Naive thymus-derived CD4-positive, alpha-beta T cell (primary cell): ENCODE measurements at regions of chr14 and their contacts with region 1.

Region 1: DNA sequence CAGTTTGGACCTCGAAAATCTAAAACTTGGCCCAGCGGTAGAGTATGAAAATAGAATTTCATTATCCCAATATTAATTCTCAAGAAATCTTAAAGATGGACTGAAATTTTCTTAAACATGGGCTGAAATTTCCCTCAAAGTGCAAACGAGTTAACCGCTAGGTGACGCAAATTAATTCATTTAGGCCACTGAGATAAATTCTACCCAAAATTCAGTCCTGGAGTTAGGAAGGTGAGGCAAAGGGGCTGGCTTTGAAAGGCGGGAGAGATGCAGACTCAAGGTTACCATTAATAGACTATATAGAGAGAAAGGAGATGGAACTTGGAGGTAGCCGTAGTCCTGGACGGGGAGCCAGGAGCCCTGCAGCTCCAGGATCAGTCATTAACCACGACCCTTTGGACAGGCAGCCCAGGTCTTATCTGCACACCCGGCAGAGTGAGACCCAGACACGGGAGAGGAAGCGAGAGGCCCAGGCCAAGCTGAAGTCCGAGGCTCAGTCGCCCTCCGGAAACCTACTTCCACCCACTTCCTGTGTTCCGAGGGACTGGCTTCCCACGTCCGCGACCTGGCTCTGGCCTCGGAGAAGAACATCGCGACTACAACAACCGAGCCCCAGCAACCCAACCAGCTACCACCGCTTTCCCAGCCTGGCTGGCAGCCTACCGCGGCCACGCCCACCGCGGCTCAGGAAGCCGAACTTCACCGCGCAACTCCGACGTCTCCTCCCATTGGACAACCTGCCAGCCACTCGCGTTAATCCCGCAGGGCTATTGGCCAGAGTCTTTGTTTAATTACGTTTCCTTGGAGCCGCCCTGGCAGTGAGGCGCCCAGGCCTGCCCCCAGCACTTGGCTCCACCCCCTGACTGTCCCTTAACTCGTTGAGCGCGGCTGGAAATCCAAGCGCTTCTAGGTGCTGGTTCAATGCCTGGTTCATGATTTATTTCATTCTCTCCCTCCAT is at the start of gene EFCAB11:
- DNase-seq: peak; percentile 80 to 98 (median 97)
- ATAC-seq: peak; percentile 90
- H3K4me3 ChIP-seq: peak within 1 kb of the TSS; percentile 72
- H3K4me3 Mint-ChIP-seq: peak within 1 kb of the TSS; percentile 74 to 98 (median 94)
- H3K27ac ChIP-seq: peak within 1 kb of the TSS; percentile 94
- H3K27ac Mint-ChIP-seq: peak within 1 kb of the TSS; percentile 82 to 98 (median 91)
- H3K4me1 ChIP-seq: peaks cover 16 to 21% of the 10 kb centered on the region in 2 donors
- H3K4me1 Mint-ChIP-seq: peaks cover 21 to 54% (median 43%) of the 10 kb centered on the region in 7 donors
- H3K27me3 ChIP-seq: no peaks in the 10 kb centered on the region
- H3K27me3 Mint-ChIP-seq: no peaks in the 10 kb centered on the region
- total RNA-seq, gene EFCAB11: 1.2 to 8.5 (median 1.9) TPM

Region 2: GRCh38 chr14:87992718-87993628 is 1961.4 kb before region 1 on chr14 and contains the start of gene GALC:
- CTCF ChIA-PET with region 1: no interaction called
- POLR2A ChIA-PET with region 1: no interaction called
- intact Hi-C with region 1: loop called (anchors 2 to 10 kb)
- DNase-seq: peak; percentile 90 to 93 (median 92)
- ATAC-seq: peak; percentile 88
- H3K4me3 ChIP-seq: peak within 1 kb of the TSS; percentile 62
- H3K4me3 Mint-ChIP-seq: peak within 1 kb of the TSS; percentile 88 to 98 (median 94)
- H3K27ac ChIP-seq: peak within 1 kb of the TSS; percentile 94
- H3K27ac Mint-ChIP-seq: peak within 1 kb of the TSS; percentile 89 to 100 (median 99)
- H3K4me1 ChIP-seq: peaks cover 16 to 39% of the 10 kb centered on the region in 2 donors
- H3K4me1 Mint-ChIP-seq: peaks cover 40 to 74% (median 70%) of the 10 kb centered on the region in 7 donors
- H3K27me3 ChIP-seq: no peaks in the 10 kb centered on the region
- H3K27me3 Mint-ChIP-seq: no peaks in the 10 kb centered on the region
- total RNA-seq, gene GALC: 17.8 to 26.1 (median 22.3) TPM

Region 3: GRCh38 chr14:88792572-88793258 is 1161.6 kb before region 1 on chr14 and contains the start of gene EML5:
- CTCF ChIA-PET with region 1: no interaction called
- POLR2A ChIA-PET with region 1: interaction called, 3 read pairs
- intact Hi-C with region 1: loop called in 1 of 2 experiments (anchors 2 kb)
- DNase-seq: peak; percentile 78 to 89 (median 86)
- ATAC-seq: peak; percentile 93
- H3K4me3 ChIP-seq: peak within 1 kb of the TSS; percentile 87
- H3K4me3 Mint-ChIP-seq: peak within 1 kb of the TSS; percentile 83 to 93 (median 91)
- H3K27ac ChIP-seq: peak within 1 kb of the TSS; percentile 78
- H3K27ac Mint-ChIP-seq: peak within 1 kb of the TSS; percentile 42 to 94 (median 77)
- H3K4me1 ChIP-seq: peaks cover 7 to 10% of the 10 kb centered on the region in 2 donors
- H3K4me1 Mint-ChIP-seq: peaks cover 8 to 29% (median 19%) of the 10 kb centered on the region in 7 donors
- H3K27me3 ChIP-seq: no peaks in the 10 kb centered on the region
- H3K27me3 Mint-ChIP-seq: peaks cover 0 to 36% (median 0%) of the 10 kb centered on the region in 5 donors
- total RNA-seq, gene EML5: 1.3 to 6.4 (median 5.4) TPM

Region 4: DNA sequence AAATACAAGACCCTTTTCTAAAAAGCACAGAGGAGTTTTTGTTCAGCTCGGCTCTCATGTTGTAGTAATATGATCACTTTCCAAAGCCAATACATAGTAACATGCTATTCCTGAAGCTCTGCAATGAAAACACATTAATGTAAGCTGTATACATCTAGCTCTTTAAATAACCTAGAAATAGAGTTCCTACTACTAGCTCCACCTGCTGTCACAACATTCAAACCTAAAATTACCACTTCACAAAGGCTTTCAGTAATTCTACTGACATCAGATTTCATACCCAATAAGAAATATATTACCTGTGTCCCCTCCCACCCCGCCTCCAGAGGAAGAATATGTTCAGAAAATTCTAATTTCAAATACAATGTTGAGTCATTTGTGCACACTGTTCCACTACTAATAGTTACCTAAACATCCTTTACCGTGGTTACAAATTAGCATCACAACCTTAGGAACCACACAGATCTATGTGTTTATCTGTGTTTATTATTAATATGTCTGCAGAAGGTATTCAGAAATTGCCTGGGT is 17.6 kb before region 1 on chr14:
- CTCF ChIA-PET with region 1: interaction called, 8 read pairs
- POLR2A ChIA-PET with region 1: interaction called, 3 read pairs
- intact Hi-C with region 1: loop called in 1 of 2 experiments (anchors 1 kb)
- DNase-seq: no peak
- ATAC-seq: no peak
- H3K4me3 ChIP-seq: no peak overlapping the region
- H3K4me3 Mint-ChIP-seq: no peak overlapping the region
- H3K27ac ChIP-seq: no peak overlapping the region
- H3K27ac Mint-ChIP-seq: no peak overlapping the region
- H3K4me1 ChIP-seq: no peaks in the 10 kb centered on the region
- H3K4me1 Mint-ChIP-seq: no peaks in the 10 kb centered on the region
- H3K27me3 ChIP-seq: no peaks in the 10 kb centered on the region
- H3K27me3 Mint-ChIP-seq: peaks cover 0 to 5% (median 0%) of the 10 kb centered on the region in 5 donors

Region 5: GRCh38 chr14:89992273-89992672 is 37.9 kb after region 1 on chr14:
- CTCF ChIA-PET with region 1: no interaction called
- POLR2A ChIA-PET with region 1: no interaction called
- intact Hi-C with region 1: no loop called
- DNase-seq: no peak
- ATAC-seq: no peak
- H3K4me3 ChIP-seq: no peak overlapping the region
- H3K4me3 Mint-ChIP-seq: no peak overlapping the region
- H3K27ac ChIP-seq: no peak overlapping the region
- H3K27ac Mint-ChIP-seq: no peak overlapping the region
- H3K4me1 ChIP-seq: no peaks in the 10 kb centered on the region
- H3K4me1 Mint-ChIP-seq: peaks cover 0 to 2% (median 0%) of the 10 kb centered on the region in 7 donors
- H3K27me3 ChIP-seq: no peaks in the 10 kb centered on the region
- H3K27me3 Mint-ChIP-seq: no peaks in the 10 kb centered on the region

Region 6: DNA sequence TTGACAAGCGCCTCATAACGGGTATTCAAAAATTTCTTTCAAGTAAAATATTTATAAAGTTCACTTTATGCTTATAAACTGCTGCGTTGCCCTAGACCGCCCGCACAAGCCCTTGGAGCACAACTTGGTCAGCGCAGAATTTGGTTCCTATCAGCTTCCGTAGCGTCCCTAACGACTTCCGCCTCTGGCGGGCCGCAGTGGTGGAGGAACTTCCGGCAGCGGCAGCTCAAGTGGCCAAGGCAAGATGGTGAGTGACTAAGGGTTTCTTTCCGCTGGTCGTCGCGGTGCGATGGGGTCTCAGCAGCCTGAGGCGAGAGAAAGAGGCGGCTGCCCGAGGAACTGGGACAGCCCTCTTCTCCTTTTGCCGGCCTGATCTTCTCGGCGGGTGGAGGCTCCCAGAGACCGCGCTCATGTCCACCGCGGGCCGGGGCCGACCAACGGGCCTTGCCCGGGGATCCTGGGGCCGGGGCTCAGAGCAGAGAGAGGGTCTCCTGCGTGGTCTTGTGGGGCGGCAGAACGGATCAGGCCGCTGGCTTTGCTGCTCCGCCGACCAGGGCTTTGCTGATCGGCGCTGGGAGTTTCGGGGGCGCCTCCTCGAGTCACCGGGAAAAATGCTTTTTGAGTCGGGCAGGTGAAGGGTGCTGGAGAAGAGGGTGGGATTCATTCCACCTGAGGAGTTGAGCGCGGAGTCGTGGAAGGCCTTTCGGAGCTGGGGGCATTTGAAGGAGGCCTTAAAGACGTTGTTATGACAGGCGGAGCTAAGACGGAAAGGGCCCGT is 302.2 kb after region 1 on chr14 and contains the start of gene PSMC1:
- CTCF ChIA-PET with region 1: no interaction called
- POLR2A ChIA-PET with region 1: interaction called, 6 read pairs
- intact Hi-C with region 1: loop called (anchors 1 kb)
- DNase-seq: peak; percentile 51 to 89 (median 85)
- ATAC-seq: peak; percentile 97
- H3K4me3 ChIP-seq: peak within 1 kb of the TSS; percentile 87
- H3K4me3 Mint-ChIP-seq: peak within 1 kb of the TSS; percentile 86 to 99 (median 96)
- H3K27ac ChIP-seq: peak within 1 kb of the TSS; percentile 86
- H3K27ac Mint-ChIP-seq: peak within 1 kb of the TSS; percentile 90 to 98 (median 96)
- H3K4me1 ChIP-seq: peaks cover 13 to 17% of the 10 kb centered on the region in 2 donors
- H3K4me1 Mint-ChIP-seq: peaks cover 12 to 39% (median 34%) of the 10 kb centered on the region in 7 donors
- H3K27me3 ChIP-seq: no peaks in the 10 kb centered on the region
- H3K27me3 Mint-ChIP-seq: peaks cover 0 to 10% (median 7%) of the 10 kb centered on the region in 5 donors
- total RNA-seq, gene PSMC1: 47.9 to 101 (median 58.2) TPM

Region 7: DNA sequence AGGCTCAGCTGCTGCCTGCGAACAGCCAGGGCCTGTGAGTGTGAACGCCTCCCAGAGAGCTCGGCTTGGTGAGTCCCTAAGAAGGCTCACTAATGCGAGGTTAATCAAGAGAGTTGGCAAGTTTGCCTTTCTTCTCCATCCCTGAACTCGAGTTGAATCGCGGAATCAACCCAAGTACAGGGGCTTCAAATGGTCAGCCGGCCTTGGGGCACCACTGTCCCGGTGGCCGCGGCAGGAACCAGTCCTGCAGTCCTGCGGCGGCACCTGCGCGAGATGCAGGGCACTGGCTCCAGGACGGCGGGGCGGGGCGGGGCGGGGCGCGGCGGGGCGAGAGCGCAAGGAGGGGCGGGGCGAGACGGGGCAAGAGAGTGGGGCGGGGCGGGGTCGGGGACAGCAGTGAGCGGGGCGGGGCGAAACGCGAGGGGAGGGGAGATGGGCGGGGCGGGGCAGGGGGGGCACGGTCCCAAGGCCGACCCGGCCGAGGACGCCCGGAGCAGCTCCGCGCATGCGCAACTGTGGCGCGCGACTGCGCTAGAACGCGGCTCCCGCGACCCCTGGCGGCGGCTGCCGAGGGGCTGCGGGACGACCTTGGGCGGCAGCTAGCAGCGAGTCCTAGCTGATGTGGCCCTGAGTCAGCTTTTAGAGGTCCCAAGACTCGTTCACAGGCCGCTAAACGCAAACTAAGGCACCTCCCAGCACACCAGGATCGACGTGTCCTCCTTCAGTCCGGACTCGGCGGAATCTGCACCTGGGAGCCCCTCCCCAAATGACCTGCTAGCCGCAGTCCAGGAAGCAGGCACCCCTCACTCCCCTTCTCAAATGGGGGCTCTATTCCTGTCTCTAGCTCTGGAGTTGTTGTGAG is 803.9 kb after region 1 on chr14:
- CTCF ChIA-PET with region 1: no interaction called
- POLR2A ChIA-PET with region 1: interaction called, 4 read pairs
- intact Hi-C with region 1: loop called (anchors 1 to 2 kb)
- DNase-seq: peak; percentile 83 to 98 (median 92)
- ATAC-seq: peak; percentile 94
- H3K4me3 ChIP-seq: peak overlapping the region; percentile 79
- H3K4me3 Mint-ChIP-seq: peak overlapping the region; percentile 75 to 92 (median 86)
- H3K27ac ChIP-seq: peak overlapping the region; percentile 75
- H3K27ac Mint-ChIP-seq: peak overlapping the region; percentile 80 to 95 (median 90)
- H3K4me1 ChIP-seq: peaks cover 7 to 21% of the 10 kb centered on the region in 2 donors
- H3K4me1 Mint-ChIP-seq: peaks cover 12 to 29% (median 23%) of the 10 kb centered on the region in 7 donors
- H3K27me3 ChIP-seq: no peaks in the 10 kb centered on the region
- H3K27me3 Mint-ChIP-seq: peaks cover 0 to 33% (median 6%) of the 10 kb centered on the region in 5 donors